ENCODE measurements at regions of chr10 and their contacts with region 1.

Region 1: GRCh38 chr10:112983444-112984056 is 33.5 kb downstream of the TCF7L2 start:
- DNase-seq: no peak
- ATAC-seq: no peak
- H3K4me3 ChIP-seq: no peak overlapping the region
- H3K27ac ChIP-seq: no peak overlapping the region
- H3K4me1 ChIP-seq: peaks cover 4 to 53% (median 29%) of the 10 kb centered on the region in 12 donors
- H3K27me3 ChIP-seq: no peaks in the 10 kb centered on the region
- CTCF ChIP-seq: no peak
- POLR2A ChIP-seq: no peak

Region 2: DNA sequence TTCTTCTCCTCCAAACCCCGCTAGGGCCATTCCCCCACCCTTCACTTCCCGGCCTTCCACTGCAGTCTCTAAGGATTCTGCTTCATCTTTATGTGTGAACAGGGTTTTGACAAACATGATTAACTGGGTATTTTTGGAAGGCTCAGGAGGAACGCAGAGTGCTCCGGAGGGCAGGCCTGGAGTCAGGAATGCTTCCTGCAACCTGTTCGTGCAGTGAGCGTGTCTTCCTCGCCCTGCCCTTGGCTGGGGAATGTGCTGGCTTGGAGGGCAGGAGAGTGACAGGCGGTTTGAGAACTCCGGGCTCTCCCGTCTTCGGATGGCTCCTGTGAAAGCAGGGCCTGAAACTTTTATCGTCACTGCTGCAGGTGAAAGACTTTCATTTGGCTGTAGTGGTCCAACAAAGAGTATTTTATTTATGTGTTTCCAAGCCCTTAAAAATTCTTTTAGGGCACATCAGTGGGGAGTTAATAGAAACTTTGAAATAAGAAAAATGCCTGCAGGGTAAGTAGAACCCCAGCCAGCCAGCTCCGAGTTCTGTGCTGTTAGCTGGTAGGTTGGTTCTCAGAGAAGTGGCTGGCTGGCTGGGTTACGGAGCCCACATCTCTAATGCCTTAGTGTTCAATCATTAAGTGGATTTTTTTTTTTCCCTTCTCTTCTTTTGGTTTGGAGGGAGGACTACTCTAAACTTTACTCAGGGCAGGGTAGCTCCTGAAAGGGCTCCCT is 17.5 kb after region 1 on chr10:
- intact Hi-C with region 1: loop called in 1 of 10 experiments (anchors 1 kb)
- DNase-seq: peak in 2 of 5 donors; percentile 62 to 70
- ATAC-seq: peak; percentile 59 to 90 (median 85)
- H3K4me3 ChIP-seq: peak overlapping the region in 1 of 12 donors; percentile 2
- H3K27ac ChIP-seq: peak overlapping the region in 10 of 12 donors; percentile 16 to 60 (median 33)
- H3K4me1 ChIP-seq: peaks cover 0 to 74% (median 40%) of the 10 kb centered on the region in 12 donors
- H3K27me3 ChIP-seq: no peaks in the 10 kb centered on the region
- CTCF ChIP-seq: peak in 5 of 12 donors; percentile 6 to 33 (median 18)
- POLR2A ChIP-seq: no peak

Region 3: GRCh38 chr10:113550365-113550764 is 566.8 kb after region 1 on chr10:
- intact Hi-C with region 1: no loop called
- DNase-seq: no peak
- ATAC-seq: no peak
- H3K4me3 ChIP-seq: no peak overlapping the region
- H3K27ac ChIP-seq: no peak overlapping the region
- H3K4me1 ChIP-seq: no peaks in the 10 kb centered on the region
- H3K27me3 ChIP-seq: peaks cover 0 to 5% (median 0%) of the 10 kb centered on the region in 9 donors
- CTCF ChIP-seq: no peak
- POLR2A ChIP-seq: no peak